Activated CD4-positive, alpha-beta T cell treated with anti-CD3 and anti-CD28 coated beads, Interleukin-2, amount 10 ng/mL, durations not matched to agents 24 days and 14 days (primary cell): ENCODE measurements at regions of chr2 and their contacts with region 1.

Region 1: DNA sequence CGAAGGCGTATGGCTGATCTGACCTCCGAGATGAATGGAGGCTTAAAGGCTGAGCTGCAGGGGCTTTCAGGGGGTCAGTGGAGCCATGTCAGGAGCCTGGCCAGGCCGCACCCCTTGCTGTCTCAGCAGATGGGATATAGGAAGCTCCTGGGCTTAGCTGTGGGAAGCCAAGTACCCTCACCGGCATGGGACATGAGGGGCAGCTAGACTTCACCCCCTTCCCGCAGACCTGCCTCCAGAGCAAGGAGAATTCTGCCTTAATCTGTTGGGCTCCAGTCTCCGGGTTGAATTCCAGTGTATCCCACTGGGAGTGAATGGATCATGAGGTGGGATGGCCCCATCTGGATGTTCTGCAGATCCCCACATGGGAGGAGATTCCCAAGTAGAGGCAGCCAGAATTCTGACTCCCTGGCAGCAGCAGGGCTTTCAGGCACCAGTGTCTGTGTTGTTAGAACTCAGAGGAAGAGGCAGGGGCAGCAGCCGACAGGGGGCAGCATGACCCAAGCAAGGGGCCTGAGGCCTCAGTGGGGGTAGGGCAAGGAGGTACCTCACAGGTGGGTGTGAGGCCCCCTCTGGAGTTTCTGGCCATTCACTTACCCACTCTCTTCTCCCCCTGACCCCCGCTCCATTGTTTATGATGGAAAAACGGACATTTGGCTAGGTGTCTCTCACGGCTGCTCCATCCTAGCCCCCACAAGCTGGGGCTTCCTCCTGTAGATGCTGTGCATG is 19.1 kb downstream of the CAPG start:
- DNase-seq: peak; percentile 93
- H3K4me3 Mint-ChIP-seq: no peak overlapping the region
- H3K27ac Mint-ChIP-seq: no peak overlapping the region
- H3K4me1 Mint-ChIP-seq: peaks cover 16% of the 10 kb centered on the region
- H3K27me3 Mint-ChIP-seq: no peaks in the 10 kb centered on the region

Region 2: DNA sequence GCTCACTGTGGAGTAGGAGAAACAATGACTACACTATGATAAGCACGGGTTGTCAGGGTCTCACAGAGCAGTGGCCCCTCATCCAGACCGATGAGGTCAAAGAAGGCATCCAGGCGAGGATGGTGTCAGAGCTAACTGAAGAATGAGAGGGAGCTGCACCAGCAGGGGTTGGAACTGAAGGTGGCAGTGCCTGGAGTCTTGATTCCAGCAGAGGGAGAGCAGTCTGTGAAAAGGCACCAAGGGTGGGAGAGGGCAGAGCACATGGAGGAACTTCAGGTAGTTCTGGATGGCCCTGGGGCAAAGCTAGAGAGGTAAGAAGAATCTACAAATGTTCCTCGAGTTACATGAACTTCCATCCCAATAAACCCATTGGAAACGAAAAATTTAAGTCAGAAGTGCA is 23.9 kb before region 1 on chr2:
- intact Hi-C with region 1: no loop called
- DNase-seq: no peak
- H3K4me3 Mint-ChIP-seq: no peak overlapping the region
- H3K27ac Mint-ChIP-seq: no peak overlapping the region
- H3K4me1 Mint-ChIP-seq: peaks cover 2% of the 10 kb centered on the region
- H3K27me3 Mint-ChIP-seq: no peaks in the 10 kb centered on the region

Region 3: DNA sequence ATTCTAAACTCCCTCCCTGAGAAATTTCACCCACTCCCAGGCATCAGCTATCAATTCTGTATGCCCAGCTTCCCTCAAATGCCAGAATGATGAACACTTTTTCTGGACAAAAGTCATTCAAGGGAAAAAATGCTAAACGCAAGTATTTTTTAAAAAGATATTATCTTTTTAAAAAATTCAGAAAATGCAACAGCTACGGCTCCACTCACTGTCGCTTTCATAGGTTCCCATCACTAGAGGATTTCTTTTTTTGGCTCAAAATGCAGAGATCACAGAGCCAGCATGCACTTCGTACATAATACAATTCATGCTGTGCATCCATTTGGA is 13.9 kb after region 1 on chr2:
- intact Hi-C with region 1: loop called (anchors 2 kb)
- DNase-seq: no peak
- H3K4me3 Mint-ChIP-seq: peak overlapping the region; percentile 76
- H3K27ac Mint-ChIP-seq: peak overlapping the region; percentile 86
- H3K4me1 Mint-ChIP-seq: peaks cover 39% of the 10 kb centered on the region
- H3K27me3 Mint-ChIP-seq: no peaks in the 10 kb centered on the region

Region 4: GRCh38 chr2:85551698-85552678 is 160.9 kb after region 1 on chr2:
- intact Hi-C with region 1: loop called (anchors 1 kb)
- DNase-seq: peak; percentile 96
- H3K4me3 Mint-ChIP-seq: no peak overlapping the region
- H3K27ac Mint-ChIP-seq: no peak overlapping the region
- H3K4me1 Mint-ChIP-seq: peaks cover 5% of the 10 kb centered on the region
- H3K27me3 Mint-ChIP-seq: no peaks in the 10 kb centered on the region